Left cardiac atrium (tissue), 4 donors: ENCODE measurements at regions of chr7 and their contacts with region 1.

Region 1: DNA sequence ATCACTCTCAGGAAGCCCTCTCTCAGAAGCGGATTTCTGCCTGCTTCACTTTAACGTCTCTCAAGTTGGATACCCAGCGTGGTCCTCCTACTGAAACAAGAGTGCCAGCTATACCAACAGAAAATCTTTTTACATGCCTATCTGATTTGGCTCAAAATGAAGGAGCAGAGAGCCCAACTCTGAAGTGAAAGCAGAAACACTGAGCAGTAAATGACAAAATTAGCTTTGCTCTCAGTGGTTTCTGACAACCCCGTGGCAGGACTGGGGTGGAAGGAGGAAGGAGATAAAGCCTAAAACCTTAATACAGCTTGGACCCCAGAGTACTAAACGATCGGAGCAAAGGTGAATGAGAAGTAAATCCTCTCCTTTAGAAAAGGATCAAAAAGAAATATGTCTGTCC is 25.1 kb upstream of the GPR37 start:
- DNase-seq: no peak
- ATAC-seq: no peak

Region 2: DNA sequence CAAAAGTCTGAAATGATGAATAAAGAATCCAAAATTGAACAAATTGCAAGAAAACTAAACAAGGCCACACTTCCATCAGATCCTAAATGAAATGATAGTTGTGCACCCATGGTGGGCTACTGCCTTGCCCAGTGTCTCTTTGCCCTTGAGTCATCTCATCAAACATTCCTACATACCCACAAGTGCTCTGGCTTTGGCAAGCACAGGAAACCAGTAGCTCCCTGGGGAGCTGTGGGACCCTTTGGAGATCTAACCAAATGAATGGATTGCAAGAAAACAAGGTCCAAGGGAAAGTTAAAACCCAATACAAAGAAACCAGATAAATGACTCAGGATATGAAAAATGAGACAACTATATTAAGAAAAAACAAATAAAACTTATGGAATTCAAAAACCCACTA is 628.0 kb before region 1 on chr7:
- intact Hi-C with region 1: loop called (anchors 5 to 10 kb)
- DNase-seq: no peak
- ATAC-seq: no peak